ENCODE measurements at regions of chr17 and their contacts with region 1.

Region 1: GRCh38 chr17:40559954-40560591 is 5.2 kb downstream of the CCR7 start:
- DNase-seq: peak; percentile 75 to 85 (median 79)
- H3K4me3 ChIP-seq: peak overlapping the region; percentile 99
- H3K4me3 Mint-ChIP-seq: peak overlapping the region; percentile 88 to 91 (median 90)
- H3K27ac ChIP-seq: peak overlapping the region; percentile 96
- H3K27ac Mint-ChIP-seq: peak overlapping the region; percentile 92 to 100 (median 98)
- H3K4me1 ChIP-seq: peaks cover 96% of the 10 kb centered on the region
- H3K4me1 Mint-ChIP-seq: peaks cover 74 to 96% (median 94%) of the 10 kb centered on the region in 3 donors
- H3K27me3 ChIP-seq: no peaks in the 10 kb centered on the region
- H3K27me3 Mint-ChIP-seq: peaks cover 0 to 7% of the 10 kb centered on the region in 2 donors

Region 2: DNA sequence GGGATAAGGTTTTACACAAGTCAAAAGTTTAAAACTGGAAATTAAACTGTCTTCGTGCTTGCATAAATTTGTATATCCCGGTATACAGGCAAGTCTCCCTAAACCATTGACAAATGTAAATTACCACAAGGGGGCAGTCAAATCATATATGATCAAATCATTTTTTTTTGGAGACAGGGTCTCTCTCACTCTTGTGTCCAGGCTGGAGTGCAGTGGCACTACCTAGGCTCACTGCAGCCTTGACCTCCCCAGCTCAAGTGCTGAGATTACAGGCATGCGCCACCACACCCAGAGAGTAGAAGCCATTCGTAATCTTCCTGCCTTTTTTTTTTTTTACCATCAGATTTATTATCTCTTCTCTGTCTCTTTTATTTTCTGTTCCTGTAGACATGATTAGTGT is 160.9 kb before region 1 on chr17:
- CTCF ChIA-PET with region 1: interaction called, 19 read pairs
- POLR2A ChIA-PET with region 1: no interaction called
- DNase-seq: peak in 2 of 5 donors; percentile 26 to 58
- H3K4me3 ChIP-seq: no peak overlapping the region
- H3K4me3 Mint-ChIP-seq: no peak overlapping the region
- H3K27ac ChIP-seq: no peak overlapping the region
- H3K27ac Mint-ChIP-seq: peak overlapping the region in 4 of 8 donors; percentile 61 to 82 (median 78)
- H3K4me1 ChIP-seq: peaks cover 11% of the 10 kb centered on the region
- H3K4me1 Mint-ChIP-seq: peaks cover 5 to 34% (median 26%) of the 10 kb centered on the region in 3 donors
- H3K27me3 ChIP-seq: no peaks in the 10 kb centered on the region
- H3K27me3 Mint-ChIP-seq: no peaks in the 10 kb centered on the region

Region 3: DNA sequence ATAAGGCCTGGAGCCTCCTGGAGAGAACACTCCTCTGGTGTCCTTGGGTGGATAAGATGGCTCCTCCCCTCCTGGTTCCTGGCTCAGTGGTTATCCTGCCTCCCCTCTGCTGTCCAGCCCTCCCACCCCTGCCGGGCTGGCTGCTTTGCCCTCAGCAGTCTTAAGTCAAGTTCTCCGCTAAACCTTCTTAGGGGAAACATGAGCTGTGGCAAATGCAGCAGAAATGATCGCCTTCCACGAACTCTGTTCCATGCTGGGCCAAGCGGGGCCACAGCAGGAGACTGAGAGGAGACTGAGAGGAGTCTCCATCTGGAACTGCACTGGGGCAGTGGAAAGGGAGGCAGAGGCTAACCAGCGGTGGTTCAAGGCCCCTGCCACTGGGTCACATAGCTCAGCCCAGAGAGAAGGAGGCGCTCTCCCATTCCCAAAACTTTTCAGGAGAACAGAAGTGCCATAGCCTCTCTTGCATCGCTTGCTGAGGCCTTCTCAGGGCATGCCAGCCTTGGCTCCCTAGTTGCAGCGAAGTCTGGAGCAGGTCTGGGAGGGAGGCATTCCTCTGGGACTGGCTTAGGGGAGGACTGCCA is 85.6 kb before region 1 on chr17:
- CTCF ChIA-PET with region 1: interaction called, 13 read pairs
- POLR2A ChIA-PET with region 1: no interaction called
- DNase-seq: no peak
- H3K4me3 ChIP-seq: no peak overlapping the region
- H3K4me3 Mint-ChIP-seq: no peak overlapping the region
- H3K27ac ChIP-seq: no peak overlapping the region
- H3K27ac Mint-ChIP-seq: peak overlapping the region in 2 of 8 donors; percentile 21 to 27
- H3K4me1 ChIP-seq: peaks cover 32% of the 10 kb centered on the region
- H3K4me1 Mint-ChIP-seq: peaks cover 16 to 32% (median 27%) of the 10 kb centered on the region in 3 donors
- H3K27me3 ChIP-seq: no peaks in the 10 kb centered on the region
- H3K27me3 Mint-ChIP-seq: peaks cover 0 to 1% of the 10 kb centered on the region in 2 donors

Region 4: DNA sequence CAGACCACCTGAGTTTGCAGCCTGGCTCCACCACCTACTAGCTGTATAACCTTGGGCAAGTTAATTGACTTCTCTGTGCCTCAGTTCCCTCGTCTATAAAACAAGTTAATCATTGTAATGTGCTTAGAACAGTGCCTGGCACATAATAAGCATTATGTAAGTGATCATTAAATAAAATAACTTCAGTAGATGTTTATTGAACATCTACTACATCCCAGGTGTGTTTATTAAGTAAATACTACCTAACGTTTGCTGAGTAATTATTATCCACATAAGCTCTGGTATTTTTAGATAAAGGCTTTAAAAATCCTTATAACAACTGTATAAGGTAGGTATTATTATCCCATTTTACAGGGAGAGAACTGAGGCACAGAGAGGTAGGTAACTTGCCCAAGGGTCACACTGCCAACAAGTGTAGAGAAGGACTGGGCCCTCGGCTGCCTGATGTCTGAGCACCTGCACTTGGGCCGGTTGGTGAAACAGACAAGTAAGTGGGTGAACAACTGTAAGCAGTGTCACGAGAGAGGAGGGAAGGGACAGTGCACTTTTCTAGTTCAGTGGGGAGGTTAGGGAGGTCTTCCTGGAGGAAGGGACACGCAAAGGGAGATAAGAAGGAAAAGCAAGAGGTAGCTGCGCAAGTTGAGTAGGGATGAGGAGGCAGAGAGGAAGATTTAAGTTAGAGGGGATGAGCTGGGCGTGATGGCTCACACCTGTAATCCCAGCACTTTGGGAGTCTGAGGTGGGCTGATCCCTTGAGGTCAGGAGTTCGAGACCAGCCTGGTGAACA is 63.2 kb before region 1 on chr17:
- CTCF ChIA-PET with region 1: no interaction called
- POLR2A ChIA-PET with region 1: no interaction called
- DNase-seq: peak in 1 of 5 donors; percentile 8
- H3K4me3 ChIP-seq: no peak overlapping the region
- H3K4me3 Mint-ChIP-seq: no peak overlapping the region
- H3K27ac ChIP-seq: no peak overlapping the region
- H3K27ac Mint-ChIP-seq: peak overlapping the region in 4 of 8 donors; percentile 4 to 77 (median 16)
- H3K4me1 ChIP-seq: peaks cover under 1% of the 10 kb centered on the region
- H3K4me1 Mint-ChIP-seq: peaks cover 0 to 4% (median under 1%) of the 10 kb centered on the region in 3 donors
- H3K27me3 ChIP-seq: no peaks in the 10 kb centered on the region
- H3K27me3 Mint-ChIP-seq: no peaks in the 10 kb centered on the region

Region 5: GRCh38 chr17:40510328-40510648 is 49.8 kb before region 1 on chr17:
- CTCF ChIA-PET with region 1: no interaction called
- POLR2A ChIA-PET with region 1: no interaction called
- DNase-seq: no peak
- H3K4me3 ChIP-seq: no peak overlapping the region
- H3K4me3 Mint-ChIP-seq: no peak overlapping the region
- H3K27ac ChIP-seq: no peak overlapping the region
- H3K27ac Mint-ChIP-seq: no peak overlapping the region
- H3K4me1 ChIP-seq: peaks cover 21% of the 10 kb centered on the region
- H3K4me1 Mint-ChIP-seq: peaks cover 19 to 34% (median 24%) of the 10 kb centered on the region in 3 donors
- H3K27me3 ChIP-seq: no peaks in the 10 kb centered on the region
- H3K27me3 Mint-ChIP-seq: no peaks in the 10 kb centered on the region

Region 6: GRCh38 chr17:40548982-40549685 is 10.9 kb before region 1 on chr17:
- CTCF ChIA-PET with region 1: interaction called, 475 read pairs
- POLR2A ChIA-PET with region 1: interaction called, 19 read pairs
- DNase-seq: peak in 1 of 5 donors; percentile 36
- H3K4me3 ChIP-seq: no peak overlapping the region
- H3K4me3 Mint-ChIP-seq: peak overlapping the region in 5 of 7 donors; percentile 10 to 53 (median 29)
- H3K27ac ChIP-seq: no peak overlapping the region
- H3K27ac Mint-ChIP-seq: peak overlapping the region; percentile 47 to 95 (median 78)
- H3K4me1 ChIP-seq: peaks cover 92% of the 10 kb centered on the region
- H3K4me1 Mint-ChIP-seq: peaks cover 81 to 93% (median 90%) of the 10 kb centered on the region in 3 donors
- H3K27me3 ChIP-seq: no peaks in the 10 kb centered on the region
- H3K27me3 Mint-ChIP-seq: no peaks in the 10 kb centered on the region

Region 7: GRCh38 chr17:40615295-40615988 is 55.4 kb after region 1 on chr17:
- CTCF ChIA-PET with region 1: interaction called, 108 read pairs
- POLR2A ChIA-PET with region 1: interaction called, 14 read pairs
- DNase-seq: peak in 3 of 5 donors; percentile 41 to 79 (median 57)
- H3K4me3 ChIP-seq: peak overlapping the region; percentile 25
- H3K4me3 Mint-ChIP-seq: peak overlapping the region in 5 of 7 donors; percentile 33 to 66 (median 49)
- H3K27ac ChIP-seq: no peak overlapping the region
- H3K27ac Mint-ChIP-seq: peak overlapping the region in 7 of 8 donors; percentile 26 to 93 (median 88)
- H3K4me1 ChIP-seq: peaks cover 74% of the 10 kb centered on the region
- H3K4me1 Mint-ChIP-seq: peaks cover 39 to 74% (median 68%) of the 10 kb centered on the region in 3 donors
- H3K27me3 ChIP-seq: peaks cover 2% of the 10 kb centered on the region
- H3K27me3 Mint-ChIP-seq: peaks cover 0 to 2% of the 10 kb centered on the region in 2 donors

Measured in CD8-positive, alpha-beta memory T cell (primary cell).